T-cell (primary cell): ENCODE measurements at regions of chr15 and their contacts with region 1.

Region 1: DNA sequence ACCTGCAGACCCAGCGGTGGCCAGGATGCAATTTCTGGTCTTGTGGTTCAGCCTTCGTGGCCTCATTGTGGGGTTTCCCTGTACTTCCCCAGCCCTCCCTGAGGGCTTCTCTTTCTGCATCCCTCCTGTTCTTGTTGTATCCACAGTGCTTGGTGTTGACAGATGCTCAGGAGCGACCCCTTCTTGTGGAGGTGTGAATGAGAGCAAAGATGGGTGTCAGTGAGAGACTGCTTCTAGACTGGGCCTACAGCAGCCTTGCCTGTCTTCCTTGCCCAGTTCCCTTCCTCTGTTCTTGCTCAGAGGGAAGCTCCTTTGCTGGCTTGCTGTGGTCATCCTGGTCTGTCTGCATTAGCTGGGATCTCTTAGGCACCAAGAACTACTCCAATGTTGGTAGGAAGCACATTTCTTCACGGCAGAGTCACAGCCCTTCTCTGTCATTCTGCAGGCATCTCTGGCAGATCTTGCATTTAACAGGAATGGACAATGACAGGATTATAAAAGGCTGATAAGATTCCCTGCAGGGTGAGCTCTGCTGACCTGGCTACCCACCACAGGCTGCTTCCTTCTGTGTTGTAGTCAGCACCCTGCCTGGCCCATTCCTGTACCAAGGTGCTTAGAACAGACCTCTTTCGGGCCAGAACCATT is 317.8 kb upstream of the C2CD4B start:
- DNase-seq: peak in 1 of 35 experiments; percentile 5
- ATAC-seq: no peak
- H3K4me3 ChIP-seq: no peak overlapping the region
- H3K4me3 Mint-ChIP-seq: no peak overlapping the region
- H3K27ac ChIP-seq: no peak overlapping the region
- H3K27ac Mint-ChIP-seq: no peak overlapping the region
- H3K4me1 ChIP-seq: no peaks in the 10 kb centered on the region
- H3K4me1 Mint-ChIP-seq: no peaks in the 10 kb centered on the region
- H3K27me3 ChIP-seq: peaks cover 2 to 10% of the 10 kb centered on the region in 2 experiments
- H3K27me3 Mint-ChIP-seq: peaks cover 4 to 10% of the 10 kb centered on the region in 2 donors

Region 2: GRCh38 chr15:61839546-61839945 is 643.4 kb before region 1 on chr15:
- CTCF ChIA-PET with region 1: no interaction called
- POLR2A ChIA-PET with region 1: interaction called in 1 of 2 experiments, 11 read pairs
- DNase-seq: no peak
- ATAC-seq: no peak
- H3K4me3 ChIP-seq: no peak overlapping the region
- H3K4me3 Mint-ChIP-seq: no peak overlapping the region
- H3K27ac ChIP-seq: no peak overlapping the region
- H3K27ac Mint-ChIP-seq: no peak overlapping the region
- H3K4me1 ChIP-seq: peaks cover 0 to 9% of the 10 kb centered on the region in 2 experiments
- H3K4me1 Mint-ChIP-seq: peaks cover 0 to 6% (median 2%) of the 10 kb centered on the region in 3 donors
- H3K27me3 ChIP-seq: peaks cover 0 to 33% of the 10 kb centered on the region in 2 experiments
- H3K27me3 Mint-ChIP-seq: peaks cover 37% of the 10 kb centered on the region in 2 donors

Region 3: DNA sequence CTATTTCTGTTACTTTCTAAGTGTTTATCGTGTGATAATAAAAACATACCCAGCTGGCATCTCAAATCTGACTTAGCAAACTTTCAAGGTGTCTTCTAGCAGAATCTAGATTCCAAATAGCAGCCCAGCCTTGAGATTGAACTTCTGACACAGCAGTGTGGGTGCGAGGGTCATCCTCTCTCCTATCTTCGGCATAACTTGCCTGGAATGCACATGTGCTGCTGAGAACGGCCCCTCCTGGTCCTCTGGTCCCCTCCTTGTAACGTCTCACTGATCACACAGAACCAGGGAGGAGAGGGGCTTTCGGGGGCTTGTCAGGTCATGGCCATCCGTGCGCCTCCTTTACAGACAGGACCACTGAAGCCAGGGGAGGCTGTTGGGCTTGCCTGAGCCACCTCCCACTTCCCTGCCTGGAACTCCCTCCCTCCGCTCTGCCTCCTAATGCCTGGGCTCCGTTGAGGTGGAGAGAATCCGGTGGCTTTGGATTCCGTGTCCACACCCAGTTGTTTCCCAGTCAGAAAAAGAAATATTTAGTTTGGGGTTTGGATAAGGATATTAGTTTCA is 26.6 kb after region 1 on chr15:
- CTCF ChIA-PET with region 1: no interaction called
- POLR2A ChIA-PET with region 1: no interaction called
- DNase-seq: no peak
- ATAC-seq: no peak
- H3K4me3 ChIP-seq: no peak overlapping the region
- H3K4me3 Mint-ChIP-seq: no peak overlapping the region
- H3K27ac ChIP-seq: no peak overlapping the region
- H3K27ac Mint-ChIP-seq: no peak overlapping the region
- H3K4me1 ChIP-seq: no peaks in the 10 kb centered on the region
- H3K4me1 Mint-ChIP-seq: no peaks in the 10 kb centered on the region
- H3K27me3 ChIP-seq: peaks cover 0 to 11% of the 10 kb centered on the region in 2 experiments
- H3K27me3 Mint-ChIP-seq: peaks cover 14 to 40% of the 10 kb centered on the region in 2 donors

Region 4: GRCh38 chr15:62558640-62559380 is 75.9 kb after region 1 on chr15:
- CTCF ChIA-PET with region 1: no interaction called
- POLR2A ChIA-PET with region 1: no interaction called
- DNase-seq: no peak
- ATAC-seq: no peak
- H3K4me3 ChIP-seq: no peak overlapping the region
- H3K4me3 Mint-ChIP-seq: no peak overlapping the region
- H3K27ac ChIP-seq: no peak overlapping the region
- H3K27ac Mint-ChIP-seq: no peak overlapping the region
- H3K4me1 ChIP-seq: no peaks in the 10 kb centered on the region
- H3K4me1 Mint-ChIP-seq: no peaks in the 10 kb centered on the region
- H3K27me3 ChIP-seq: peaks cover 0 to 13% of the 10 kb centered on the region in 2 experiments
- H3K27me3 Mint-ChIP-seq: peaks cover 31 to 33% of the 10 kb centered on the region in 2 donors